Aorta (tissue), 5 donors: ENCODE measurements at regions of chr1 and their contacts with region 1.

Region 1: DNA sequence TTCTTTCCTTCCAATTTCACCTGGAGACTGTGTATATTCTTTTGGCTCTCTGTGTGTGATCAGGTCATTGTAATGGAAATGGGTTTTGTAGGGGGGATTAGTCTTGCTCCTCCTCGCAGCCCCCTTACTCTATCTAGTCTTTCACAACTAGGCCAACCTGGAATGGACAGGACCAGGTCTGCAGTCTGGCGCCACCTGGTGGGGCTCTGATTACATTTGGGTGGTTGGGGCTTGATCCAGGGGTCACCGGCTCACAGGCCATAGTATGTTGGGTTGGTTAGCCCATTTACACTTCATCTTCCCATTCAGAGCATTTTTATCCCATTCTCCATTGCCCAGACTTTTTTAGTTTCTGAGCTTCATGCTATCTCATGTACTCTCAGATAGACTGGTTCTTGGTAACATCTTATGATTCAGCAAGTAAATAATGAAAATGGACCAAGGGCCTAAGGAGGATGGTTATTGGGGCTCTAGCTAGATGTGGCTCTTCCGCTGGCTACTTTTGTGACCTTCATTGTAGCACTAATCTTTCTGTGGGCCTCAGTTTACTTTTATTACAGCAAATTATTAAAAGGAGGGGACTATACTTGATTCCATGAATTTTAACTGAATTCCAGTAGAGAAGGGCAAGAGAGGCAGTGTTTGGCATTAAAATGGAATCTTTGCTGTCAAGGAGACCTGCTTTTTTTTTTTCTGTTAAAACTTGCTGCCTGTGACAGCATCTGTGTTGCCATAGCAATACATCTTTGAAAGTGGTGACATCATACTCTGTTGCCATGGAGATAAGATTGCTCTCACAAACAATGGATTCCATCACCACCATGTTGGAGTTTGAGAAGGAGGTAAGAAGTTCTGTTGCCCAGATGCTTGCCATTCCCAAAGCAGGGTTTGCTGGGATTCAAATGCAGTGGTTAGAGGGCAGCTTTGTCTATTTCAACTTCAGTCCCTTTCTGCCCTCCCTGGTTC is 150.1 kb downstream of the PLXNA2 start:
- DNase-seq: peak; percentile 76 to 89
- ATAC-seq: peak; percentile 51
- H3K4me3 ChIP-seq: no peak overlapping the region
- H3K27ac ChIP-seq: no peak overlapping the region
- H3K4me1 ChIP-seq: no peaks in the 10 kb centered on the region
- H3K27me3 ChIP-seq: no peaks in the 10 kb centered on the region

Region 2: DNA sequence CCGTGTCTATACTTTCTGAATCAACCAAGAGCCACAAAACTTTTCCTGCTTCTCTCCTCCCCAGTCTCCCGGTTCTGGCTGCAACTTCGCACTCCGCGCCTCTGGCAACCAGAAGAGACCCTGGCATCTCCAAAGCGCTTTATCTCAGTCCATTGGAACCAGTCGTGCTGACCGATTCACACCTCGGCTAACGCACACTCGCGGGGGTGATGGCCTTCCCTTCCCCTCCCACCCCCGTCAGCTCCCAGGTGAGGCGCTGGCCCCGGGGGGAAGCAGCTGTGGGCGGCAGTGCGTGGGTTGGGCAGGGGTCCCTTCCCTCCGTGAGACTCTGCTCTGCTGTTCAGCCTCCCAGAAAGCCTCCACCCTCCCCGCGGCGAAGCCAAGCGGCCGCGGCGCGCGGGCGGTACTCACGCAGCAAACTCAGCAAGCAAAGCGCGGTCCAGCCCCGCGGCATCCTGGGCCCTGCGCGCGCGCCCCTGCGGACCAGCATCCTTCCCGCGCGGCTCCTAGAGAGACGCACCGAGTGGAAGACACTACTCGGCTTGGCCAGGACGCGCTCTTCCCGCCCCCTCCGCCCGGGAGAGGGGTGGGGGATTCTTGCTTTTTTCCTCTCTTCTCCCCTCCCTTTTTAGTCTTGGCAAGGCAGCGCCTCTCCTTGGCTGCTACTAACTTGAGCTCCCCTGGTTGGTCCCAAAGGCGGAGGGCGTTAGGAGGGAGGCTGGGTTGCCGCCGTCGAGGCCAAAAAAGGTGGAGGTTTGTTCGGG is 183.3 kb before region 1 on chr1 and contains the start of gene CD34:
- intact Hi-C with region 1: no loop called
- DNase-seq: peak; percentile 76 to 88
- ATAC-seq: peak; percentile 82
- H3K4me3 ChIP-seq: peak within 1 kb of the TSS; percentile 50 to 62
- H3K27ac ChIP-seq: peak within 1 kb of the TSS in 1 of 2 donors; percentile 55
- H3K4me1 ChIP-seq: no peaks in the 10 kb centered on the region
- H3K27me3 ChIP-seq: no peaks in the 10 kb centered on the region
- total RNA-seq, gene CD34: 61.4 to 195 TPM

Region 3: GRCh38 chr1:208024406-208024805 is 69.6 kb before region 1 on chr1:
- intact Hi-C with region 1: loop called (anchors 5 kb)
- DNase-seq: peak in 1 of 2 donors; percentile 34
- ATAC-seq: no peak
- H3K4me3 ChIP-seq: no peak overlapping the region
- H3K27ac ChIP-seq: no peak overlapping the region
- H3K4me1 ChIP-seq: peaks cover 0 to 3% of the 10 kb centered on the region in 2 donors
- H3K27me3 ChIP-seq: no peaks in the 10 kb centered on the region

Region 4: GRCh38 chr1:208047476-208047934 is 46.5 kb before region 1 on chr1:
- intact Hi-C with region 1: loop called in 1 of 2 experiments (anchors 2 kb)
- DNase-seq: peak; percentile 80 to 83
- ATAC-seq: peak; percentile 92
- H3K4me3 ChIP-seq: no peak overlapping the region
- H3K27ac ChIP-seq: peak overlapping the region; percentile 49 to 90
- H3K4me1 ChIP-seq: peaks cover 0 to 3% of the 10 kb centered on the region in 2 donors
- H3K27me3 ChIP-seq: no peaks in the 10 kb centered on the region

Region 5: DNA sequence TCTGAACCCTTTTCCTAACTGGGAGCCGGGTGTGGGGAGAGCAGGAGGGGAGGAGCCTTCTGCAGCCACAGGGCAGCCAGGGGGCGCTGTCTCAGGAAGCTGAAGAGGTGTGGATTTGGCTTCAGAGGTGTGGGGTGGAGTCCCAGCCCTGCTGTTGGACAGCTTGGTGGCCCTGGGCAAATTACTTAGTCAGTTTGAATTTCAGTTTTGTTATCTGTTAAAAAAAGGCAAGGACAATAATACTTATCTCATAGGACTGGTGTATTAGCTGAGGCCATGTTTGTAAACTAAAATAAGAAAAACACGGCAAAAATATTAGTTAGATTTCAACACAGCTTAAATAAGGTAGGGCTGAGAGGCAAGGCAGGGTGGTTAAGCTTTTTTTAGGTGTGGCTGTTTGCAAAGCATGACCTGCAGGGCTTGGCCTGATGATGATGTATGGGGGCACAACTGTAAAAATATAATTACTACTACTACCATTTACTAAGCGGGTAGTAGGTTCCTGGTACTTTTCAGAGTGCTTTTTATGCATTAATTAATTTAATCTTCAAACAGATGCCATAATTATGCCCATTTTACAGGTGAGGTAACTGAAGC is 38.3 kb after region 1 on chr1:
- intact Hi-C with region 1: no loop called
- DNase-seq: peak; percentile 85 to 95
- ATAC-seq: peak; percentile 86
- H3K4me3 ChIP-seq: no peak overlapping the region
- H3K27ac ChIP-seq: no peak overlapping the region
- H3K4me1 ChIP-seq: peaks cover 0 to 6% of the 10 kb centered on the region in 2 donors
- H3K27me3 ChIP-seq: no peaks in the 10 kb centered on the region

Region 6: DNA sequence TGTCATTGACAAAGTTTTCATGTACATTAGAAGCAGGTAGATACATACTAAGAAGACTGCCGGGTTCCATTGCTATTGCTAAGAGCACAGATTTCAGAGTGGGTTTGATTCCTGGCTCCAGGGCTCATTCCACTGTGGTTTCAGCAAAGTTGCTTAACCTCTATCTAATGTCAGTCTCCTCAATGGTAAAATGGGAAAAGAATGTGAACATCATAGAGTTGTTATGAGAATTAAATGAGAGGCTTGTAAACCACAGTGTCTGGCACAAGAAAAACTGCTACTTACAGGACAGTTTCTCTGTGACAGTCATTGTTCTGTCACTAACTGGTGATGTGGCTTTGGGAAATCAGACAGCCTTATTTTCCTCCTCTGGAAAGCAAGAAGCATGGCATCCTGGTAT is 160.8 kb after region 1 on chr1:
- intact Hi-C with region 1: no loop called
- DNase-seq: no peak
- ATAC-seq: no peak
- H3K4me3 ChIP-seq: no peak overlapping the region
- H3K27ac ChIP-seq: no peak overlapping the region
- H3K4me1 ChIP-seq: peaks cover 2 to 3% of the 10 kb centered on the region in 2 donors
- H3K27me3 ChIP-seq: no peaks in the 10 kb centered on the region